Posterior vena cava (tissue), 2 donors: ENCODE measurements at regions of chr14 and their contacts with region 1.

Region 1: GRCh38 chr14:32076278-32077080 is 625 bp upstream of the ARHGAP5 start:
- DNase-seq: peak; percentile 99

Region 2: DNA sequence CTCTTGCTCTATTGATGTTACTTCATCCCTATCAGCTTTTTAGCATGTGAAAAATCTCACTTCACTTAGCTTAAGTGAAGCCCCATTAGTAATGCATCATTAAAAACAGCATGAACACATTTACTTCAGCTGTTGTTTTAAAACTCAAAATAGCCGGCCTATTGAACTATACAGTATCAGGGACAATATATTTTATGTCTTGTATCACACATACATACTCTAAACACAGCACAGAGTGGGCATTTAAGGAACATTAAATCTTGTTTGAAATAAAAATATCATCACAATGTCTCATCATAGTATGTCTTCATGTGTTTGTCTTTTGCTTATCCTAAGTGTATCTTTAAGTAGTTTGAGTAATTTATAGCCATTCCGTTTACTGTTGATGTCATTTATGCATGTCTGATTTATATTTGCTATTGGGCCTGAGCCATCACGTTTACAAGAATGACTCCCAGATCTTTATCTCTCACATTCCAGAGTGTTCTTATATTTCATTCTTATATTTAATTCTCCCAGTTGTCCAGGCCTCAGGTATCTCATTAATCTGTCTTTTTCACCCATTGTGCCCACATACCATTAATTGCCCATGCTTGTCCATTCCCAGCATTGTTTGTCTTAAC is 58.1 kb after region 1 on chr14:
- intact Hi-C with region 1: loop called in 1 of 2 experiments (anchors 2 kb)
- DNase-seq: no peak